ENCODE measurements at regions of chr3 and their contacts with region 1.

Region 1: GRCh38 chr3:4493014-4493940 is at the start of gene ITPR1:
- DNase-seq: peak; percentile 96 to 97
- ATAC-seq: peak; percentile 93 to 94
- H3K4me3 ChIP-seq: peak within 1 kb of the TSS; percentile 78 to 97 (median 87)
- H3K27ac ChIP-seq: peak within 1 kb of the TSS; percentile 90 to 97 (median 92)
- H3K4me1 ChIP-seq: peaks cover 16 to 25% of the 10 kb centered on the region in 2 donors
- H3K27me3 ChIP-seq: no peaks in the 10 kb centered on the region
- CTCF ChIP-seq: no peak
- POLR2A ChIP-seq: peak; percentile 95 to 99
- total RNA-seq, gene ITPR1: 5.5 to 21.7 (median 11.3) TPM

Region 2: GRCh38 chr3:3799173-3800079 is 693.9 kb before region 1 on chr3 and contains the start of gene LRRN1:
- in situ Hi-C with region 1: no loop called
- intact Hi-C with region 1: loop called (anchors 10 kb)
- DNase-seq: peak; percentile 47 to 52
- ATAC-seq: peak; percentile 53 to 62
- H3K4me3 ChIP-seq: peak within 1 kb of the TSS; percentile 55 to 75 (median 70)
- H3K27ac ChIP-seq: peak within 1 kb of the TSS; percentile 75 to 87 (median 82)
- H3K4me1 ChIP-seq: peaks cover 12 to 17% of the 10 kb centered on the region in 2 donors
- H3K27me3 ChIP-seq: no peaks in the 10 kb centered on the region
- CTCF ChIP-seq: no peak
- POLR2A ChIP-seq: peak; percentile 89 to 94
- total RNA-seq, gene LRRN1: 1.1 to 6.8 (median 4.3) TPM

Region 3: DNA sequence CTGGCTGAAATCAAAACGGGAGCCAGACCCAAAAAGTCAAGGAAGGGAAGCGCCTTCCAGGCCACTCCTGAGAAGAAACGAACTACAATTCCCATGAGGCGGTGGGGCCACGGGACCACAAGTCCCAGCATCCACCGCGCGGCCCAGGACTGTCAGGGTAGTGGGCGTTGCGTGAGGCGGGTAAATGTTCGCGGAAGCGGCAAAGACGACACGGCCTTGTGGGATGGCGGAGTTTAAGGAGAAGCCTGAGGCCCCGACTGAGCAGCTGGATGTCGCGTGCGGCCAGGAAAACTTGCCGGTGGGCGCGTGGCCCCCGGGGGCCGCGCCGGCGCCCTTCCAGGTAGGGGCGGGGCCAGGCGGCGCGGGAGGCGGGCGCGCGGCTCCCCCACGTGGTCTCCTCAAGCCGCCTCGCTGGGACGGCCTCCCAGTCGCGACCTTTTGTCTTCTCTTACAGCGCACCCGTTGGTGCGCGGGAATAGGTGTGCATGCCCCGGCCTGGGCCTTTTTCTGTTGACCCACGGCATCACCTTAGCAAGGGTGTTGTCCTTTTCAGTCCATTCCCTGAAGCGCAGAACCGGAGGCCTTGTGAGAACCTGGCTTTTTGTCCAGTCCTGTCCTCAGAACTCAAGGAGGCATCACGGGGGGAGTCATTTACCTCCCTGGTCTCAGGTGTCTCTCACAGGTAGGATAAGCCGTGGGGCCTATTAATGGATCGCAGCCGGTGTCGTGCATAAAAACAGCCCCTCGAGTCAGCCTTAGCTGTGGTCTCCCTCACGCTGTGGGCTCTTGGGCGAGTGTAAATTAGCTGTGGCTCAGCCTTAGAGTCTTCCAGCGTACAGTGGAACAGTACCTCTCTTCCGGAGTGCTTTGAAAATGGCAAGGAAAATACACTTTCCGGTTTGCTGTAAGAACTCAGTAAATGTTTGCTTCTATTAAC is 189.8 kb before region 1 on chr3 and contains the start of gene SETMAR:
- in situ Hi-C with region 1: no loop called
- intact Hi-C with region 1: loop called (anchors 5 kb)
- DNase-seq: peak; percentile 85 to 88
- ATAC-seq: peak; percentile 96 to 97
- H3K4me3 ChIP-seq: peak within 1 kb of the TSS; percentile 68 to 84 (median 78)
- H3K27ac ChIP-seq: peak within 1 kb of the TSS; percentile 87 to 95 (median 90)
- H3K4me1 ChIP-seq: peaks cover 32 to 38% of the 10 kb centered on the region in 2 donors
- H3K27me3 ChIP-seq: no peaks in the 10 kb centered on the region
- CTCF ChIP-seq: no peak
- POLR2A ChIP-seq: peak; percentile 61 to 71
- total RNA-seq, gene SETMAR: 3.7 to 10.4 (median 7.6) TPM

Region 4: DNA sequence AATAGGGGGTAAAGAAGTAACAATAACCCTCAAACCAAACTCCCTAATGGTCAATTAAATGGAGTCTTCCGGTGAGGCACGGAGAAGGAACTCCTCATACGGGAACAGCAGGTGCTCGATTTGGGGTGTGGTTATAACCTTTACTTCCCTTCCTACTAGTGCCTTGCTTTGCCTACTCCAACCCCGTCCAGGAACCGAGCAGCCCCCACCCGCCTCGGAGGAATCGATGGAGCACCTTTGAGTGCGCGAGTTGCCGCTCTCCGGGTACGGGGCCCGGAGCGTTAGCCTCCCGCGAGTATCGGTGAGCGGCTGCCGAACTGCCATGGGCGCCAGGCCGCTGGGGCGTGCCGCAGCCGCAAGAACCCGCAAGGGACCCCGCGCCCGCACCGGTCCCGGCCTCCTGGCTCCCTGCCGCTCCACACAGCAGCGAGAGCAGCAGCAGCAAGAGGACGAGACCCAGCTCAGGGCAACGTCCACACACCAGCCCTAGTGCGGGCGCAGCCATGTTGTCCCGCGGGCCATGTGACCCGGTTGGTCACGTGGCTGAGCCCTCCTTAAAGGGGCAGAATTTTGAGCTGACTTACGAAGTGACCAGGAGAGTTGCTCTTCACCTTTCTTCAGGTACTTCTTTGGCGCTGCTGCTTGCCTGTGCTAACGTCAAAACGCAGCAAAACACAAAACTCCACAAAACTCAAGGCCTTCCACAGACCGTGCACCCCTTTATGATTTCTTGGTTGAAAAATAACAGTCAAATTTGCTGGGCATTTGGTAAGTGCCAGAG is 26.3 kb before region 1 on chr3 and contains the start of gene SUMF1:
- in situ Hi-C with region 1: no loop called
- intact Hi-C with region 1: loop called (anchors 1 kb)
- DNase-seq: peak; percentile 53 to 70
- ATAC-seq: peak; percentile 98 to 99
- H3K4me3 ChIP-seq: peak within 1 kb of the TSS; percentile 82 to 93 (median 90)
- H3K27ac ChIP-seq: peak within 1 kb of the TSS; percentile 77 to 84 (median 84)
- H3K4me1 ChIP-seq: peaks cover 8 to 11% of the 10 kb centered on the region in 2 donors
- H3K27me3 ChIP-seq: no peaks in the 10 kb centered on the region
- CTCF ChIP-seq: no peak
- POLR2A ChIP-seq: peak; percentile 41 to 46
- total RNA-seq, gene SUMF1: 4.4 to 9.4 (median 7.6) TPM

Region 5: DNA sequence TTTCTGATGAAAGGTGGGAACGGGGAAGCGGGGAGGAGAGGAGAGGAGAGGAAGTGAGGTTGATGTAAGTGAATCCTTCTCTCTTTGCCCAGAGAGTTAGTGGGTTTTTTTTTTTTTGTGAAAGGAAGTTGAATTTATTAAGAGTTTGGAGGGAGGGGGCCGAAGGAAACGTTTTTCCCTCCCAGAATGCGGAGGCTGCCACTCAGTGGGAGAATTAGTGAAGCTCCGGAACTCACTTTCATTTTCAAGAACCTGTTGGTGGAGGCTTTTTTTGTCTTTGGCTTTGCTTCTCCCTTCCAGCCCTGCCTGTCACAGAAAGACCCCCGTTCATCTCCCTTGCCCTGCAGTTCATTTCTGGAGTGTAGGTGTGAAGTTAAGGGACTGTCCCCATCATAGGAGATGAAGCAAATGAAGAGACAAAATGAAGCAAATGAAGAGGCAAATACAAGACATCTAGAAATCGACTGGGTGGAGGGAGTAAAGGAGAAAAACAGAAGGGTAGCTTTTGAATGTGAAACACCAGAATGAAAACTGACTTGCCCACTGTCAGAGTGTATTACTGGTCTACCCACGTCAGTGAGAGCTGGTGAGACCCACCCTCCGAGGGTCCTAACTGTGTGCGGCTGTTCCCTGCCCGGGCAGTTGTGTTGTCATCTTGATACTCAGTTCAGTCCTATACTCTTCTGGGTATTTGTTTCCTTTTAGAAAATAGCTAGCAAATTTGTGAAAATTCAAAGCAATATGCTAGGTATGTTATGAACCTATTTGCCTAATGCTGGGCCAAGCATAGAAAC is 91.4 kb after region 1 on chr3:
- in situ Hi-C with region 1: no loop called
- intact Hi-C with region 1: loop called (anchors 5 kb)
- DNase-seq: no peak
- ATAC-seq: peak; percentile 28 to 40
- H3K4me3 ChIP-seq: peak overlapping the region; percentile 32 to 49 (median 39)
- H3K27ac ChIP-seq: peak overlapping the region; percentile 46 to 67 (median 58)
- H3K4me1 ChIP-seq: peaks cover 3 to 10% of the 10 kb centered on the region in 2 donors
- H3K27me3 ChIP-seq: no peaks in the 10 kb centered on the region
- CTCF ChIP-seq: no peak
- POLR2A ChIP-seq: no peak

Region 6: DNA sequence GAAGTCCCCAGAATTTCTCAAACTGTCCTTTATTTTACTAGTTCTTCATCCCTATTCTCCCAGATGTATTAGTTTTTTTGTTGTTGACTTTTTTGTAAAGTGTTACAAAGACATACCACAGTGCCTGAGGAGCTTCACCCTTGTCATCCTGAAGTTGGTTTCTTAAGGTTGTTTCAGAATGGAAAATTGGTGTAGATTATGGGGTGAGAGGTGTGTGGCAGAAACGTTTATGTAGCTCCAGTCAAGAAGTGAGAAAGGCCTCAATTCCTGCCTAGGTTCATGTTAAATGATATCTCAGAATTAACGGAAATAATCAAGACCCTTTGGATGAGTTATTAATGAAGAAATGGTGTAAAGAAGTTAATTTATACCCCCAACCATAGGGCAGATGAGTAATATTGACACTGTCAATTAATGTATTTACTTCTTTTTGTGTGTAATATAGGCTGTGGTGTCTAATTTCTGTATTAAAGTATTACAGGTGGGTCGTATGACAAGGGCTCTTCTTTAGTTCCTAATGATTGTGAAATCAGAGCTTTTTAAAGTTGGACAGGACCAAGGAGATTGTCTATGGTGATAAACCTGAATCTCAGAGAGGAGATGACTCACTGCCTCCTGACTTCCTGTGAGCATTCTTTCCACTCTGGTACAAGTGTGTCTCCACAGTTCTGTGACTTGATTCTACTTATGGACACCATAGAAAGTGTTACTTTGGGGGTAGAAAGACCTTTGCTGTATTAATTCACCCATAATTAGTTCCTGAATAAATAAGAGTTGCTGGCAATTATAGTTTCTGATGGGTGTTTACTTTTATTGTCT is 701.3 kb after region 1 on chr3:
- in situ Hi-C with region 1: no loop called
- intact Hi-C with region 1: loop called (anchors 10 kb)
- DNase-seq: peak; percentile 69 to 70
- ATAC-seq: peak; percentile 97 to 98
- H3K4me3 ChIP-seq: no peak overlapping the region
- H3K27ac ChIP-seq: peak overlapping the region; percentile 79 to 88 (median 82)
- H3K4me1 ChIP-seq: peaks cover 49 to 51% of the 10 kb centered on the region in 2 donors
- H3K27me3 ChIP-seq: no peaks in the 10 kb centered on the region
- CTCF ChIP-seq: no peak
- POLR2A ChIP-seq: peak in 1 of 2 donors; percentile 39